GM13976 (cell line): ENCODE measurements at regions of chr1 and their contacts with region 1.

Region 1: DNA sequence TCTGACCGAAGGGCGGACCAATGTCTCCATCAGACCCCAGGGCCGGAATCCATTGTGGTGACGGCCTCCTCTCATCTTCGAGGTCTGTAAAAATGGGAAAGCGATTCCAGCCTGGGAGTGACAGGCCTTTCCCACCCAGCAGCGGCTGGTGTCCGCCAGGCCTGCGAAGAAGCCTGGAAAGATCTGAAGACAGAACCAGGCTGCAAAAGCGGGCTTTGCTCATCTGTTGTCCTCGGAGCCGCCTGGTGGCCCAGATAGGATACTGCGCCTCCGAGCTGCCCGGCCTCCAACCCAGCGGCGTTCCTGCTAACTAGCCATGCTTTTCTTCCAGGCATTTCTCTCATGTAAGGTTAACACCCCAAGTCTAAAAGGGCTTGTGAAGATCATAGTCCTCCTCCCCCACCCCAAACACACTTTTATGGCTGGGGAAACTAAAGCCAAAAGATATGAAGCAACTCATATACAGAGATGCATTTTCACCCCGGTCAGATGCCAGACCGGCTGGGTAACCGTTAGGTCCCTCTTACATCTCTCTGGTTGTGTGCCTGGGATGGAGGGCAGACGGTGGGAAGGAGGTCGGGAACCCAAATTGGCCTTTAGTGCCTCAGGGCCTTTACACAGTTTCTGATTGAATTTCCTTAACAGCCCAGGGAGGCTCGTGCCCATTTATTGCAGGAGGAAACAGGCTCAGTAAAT is 1.9 kb upstream of the DHRS3 start:
- DNase-seq: peak; percentile 87
- CTCF ChIP-seq: peak; percentile 97

Region 2: GRCh38 chr1:12124693-12125421 is 495.1 kb before region 1 on chr1:
- in situ Hi-C with region 1: loop called (anchors 25 kb)
- DNase-seq: peak; percentile 77
- CTCF ChIP-seq: peak; percentile 84

Region 3: DNA sequence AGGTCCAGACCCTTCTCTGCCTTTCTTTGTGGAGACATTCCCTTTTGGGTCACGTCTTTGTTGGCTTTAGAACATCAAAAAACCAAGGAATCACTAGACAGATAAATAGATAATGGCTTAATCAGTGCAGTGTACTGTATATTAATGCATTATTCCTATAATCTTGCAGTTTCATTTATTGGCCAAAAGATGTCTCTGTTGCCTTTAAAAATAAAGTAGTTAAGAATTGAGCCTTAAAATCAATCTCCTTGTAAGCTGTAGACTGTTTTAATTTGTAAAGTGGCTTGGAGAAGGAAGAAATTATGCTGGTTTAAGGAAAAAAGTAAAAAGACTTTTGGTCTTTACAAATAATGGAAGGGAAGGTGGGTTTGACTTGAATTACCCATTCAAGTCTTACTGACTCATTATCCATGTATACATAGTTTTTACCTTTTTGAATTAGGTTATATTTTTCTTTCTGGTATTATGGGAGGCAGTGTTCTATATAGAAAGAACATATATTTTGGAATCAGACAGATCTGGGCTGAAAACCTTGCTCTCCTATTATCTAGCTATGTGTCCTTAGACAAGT is 305.5 kb before region 1 on chr1:
- in situ Hi-C with region 1: loop called (anchors 25 kb)
- DNase-seq: peak; percentile 34
- CTCF ChIP-seq: no peak